T-cell (primary cell): ENCODE measurements at regions of chr13 and their contacts with region 1.

Region 1: DNA sequence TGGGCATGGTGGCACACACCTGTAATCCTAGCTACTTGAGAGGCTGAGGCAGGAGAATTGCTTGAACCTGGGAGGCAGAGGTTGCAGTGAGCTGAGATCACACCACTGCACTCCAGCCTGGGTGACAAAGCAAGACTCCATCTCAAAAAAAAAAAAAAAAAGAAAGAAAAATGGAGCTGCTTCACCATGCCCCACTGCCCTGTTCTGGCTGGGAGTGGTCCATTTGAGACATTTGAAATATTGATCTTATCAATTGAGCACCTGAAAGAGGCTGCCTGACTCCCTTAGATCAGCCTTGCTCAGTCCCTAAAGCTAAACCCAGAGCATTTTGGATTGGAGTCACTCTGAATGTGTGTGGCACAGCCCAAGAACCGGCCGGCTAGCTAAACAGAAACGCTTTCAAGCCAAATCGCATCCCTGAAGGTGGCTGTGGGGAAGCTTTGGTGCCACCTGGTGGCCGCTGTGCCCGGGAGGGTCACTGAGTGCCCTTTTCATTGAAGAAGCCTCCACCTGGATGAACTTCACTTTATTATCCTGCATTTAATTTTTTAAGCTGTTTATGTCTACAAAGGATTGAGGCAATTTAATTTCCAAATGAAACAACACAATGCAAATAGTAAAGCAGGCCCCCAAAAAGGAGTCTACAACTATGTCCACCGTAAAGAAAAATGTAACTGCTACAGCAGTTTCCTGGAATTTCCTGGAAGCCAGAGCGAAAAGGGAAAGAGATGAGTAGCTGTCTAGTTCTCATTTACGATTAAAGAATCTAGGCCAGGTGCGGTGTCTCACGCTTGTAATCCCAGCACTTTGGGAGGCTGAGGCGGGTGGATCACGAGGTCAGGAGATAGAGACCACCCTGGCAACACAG is 53.1 kb upstream of the SERPINE3 start:
- DNase-seq: peak; percentile 2 to 69 (median 45)
- ATAC-seq: peak; percentile 58 to 76 (median 68)
- H3K4me3 ChIP-seq: no peak overlapping the region
- H3K4me3 Mint-ChIP-seq: no peak overlapping the region
- H3K27ac ChIP-seq: no peak overlapping the region
- H3K27ac Mint-ChIP-seq: no peak overlapping the region
- H3K4me1 ChIP-seq: peaks cover 0 to 3% of the 10 kb centered on the region in 2 experiments
- H3K4me1 Mint-ChIP-seq: peaks cover 0 to 2% (median 0%) of the 10 kb centered on the region in 3 donors
- H3K27me3 ChIP-seq: peaks cover 0 to 3% of the 10 kb centered on the region in 2 experiments
- H3K27me3 Mint-ChIP-seq: peaks cover 0 to 7% of the 10 kb centered on the region in 2 donors

Region 2: GRCh38 chr13:51125498-51126226 is 160.7 kb before region 1 on chr13:
- CTCF ChIA-PET with region 1: interaction called, 5 to 10 read pairs
- POLR2A ChIA-PET with region 1: no interaction called
- DNase-seq: peak in 22 of 35 experiments; percentile 6 to 60 (median 18)
- ATAC-seq: peak in 3 of 4 experiments; percentile 37 to 71 (median 54)
- H3K4me3 ChIP-seq: no peak overlapping the region
- H3K4me3 Mint-ChIP-seq: no peak overlapping the region
- H3K27ac ChIP-seq: no peak overlapping the region
- H3K27ac Mint-ChIP-seq: no peak overlapping the region
- H3K4me1 ChIP-seq: no peaks in the 10 kb centered on the region
- H3K4me1 Mint-ChIP-seq: peaks cover 0 to 10% (median 7%) of the 10 kb centered on the region in 3 donors
- H3K27me3 ChIP-seq: peaks cover 0 to 9% of the 10 kb centered on the region in 2 experiments
- H3K27me3 Mint-ChIP-seq: peaks cover 9% of the 10 kb centered on the region in 2 donors

Region 3: GRCh38 chr13:51349016-51349415 is 62.6 kb after region 1 on chr13:
- CTCF ChIA-PET with region 1: no interaction called
- POLR2A ChIA-PET with region 1: no interaction called
- DNase-seq: no peak
- ATAC-seq: no peak
- H3K4me3 ChIP-seq: no peak overlapping the region
- H3K4me3 Mint-ChIP-seq: no peak overlapping the region
- H3K27ac ChIP-seq: no peak overlapping the region
- H3K27ac Mint-ChIP-seq: no peak overlapping the region
- H3K4me1 ChIP-seq: no peaks in the 10 kb centered on the region
- H3K4me1 Mint-ChIP-seq: no peaks in the 10 kb centered on the region
- H3K27me3 ChIP-seq: no peaks in the 10 kb centered on the region
- H3K27me3 Mint-ChIP-seq: no peaks in the 10 kb centered on the region

Region 4: GRCh38 chr13:51465124-51465523 is 178.8 kb after region 1 on chr13:
- CTCF ChIA-PET with region 1: no interaction called
- POLR2A ChIA-PET with region 1: no interaction called
- DNase-seq: no peak
- ATAC-seq: no peak
- H3K4me3 ChIP-seq: no peak overlapping the region
- H3K4me3 Mint-ChIP-seq: no peak overlapping the region
- H3K27ac ChIP-seq: no peak overlapping the region
- H3K27ac Mint-ChIP-seq: no peak overlapping the region
- H3K4me1 ChIP-seq: no peaks in the 10 kb centered on the region
- H3K4me1 Mint-ChIP-seq: no peaks in the 10 kb centered on the region
- H3K27me3 ChIP-seq: no peaks in the 10 kb centered on the region
- H3K27me3 Mint-ChIP-seq: peaks cover 0 to 3% of the 10 kb centered on the region in 2 donors

Region 5: DNA sequence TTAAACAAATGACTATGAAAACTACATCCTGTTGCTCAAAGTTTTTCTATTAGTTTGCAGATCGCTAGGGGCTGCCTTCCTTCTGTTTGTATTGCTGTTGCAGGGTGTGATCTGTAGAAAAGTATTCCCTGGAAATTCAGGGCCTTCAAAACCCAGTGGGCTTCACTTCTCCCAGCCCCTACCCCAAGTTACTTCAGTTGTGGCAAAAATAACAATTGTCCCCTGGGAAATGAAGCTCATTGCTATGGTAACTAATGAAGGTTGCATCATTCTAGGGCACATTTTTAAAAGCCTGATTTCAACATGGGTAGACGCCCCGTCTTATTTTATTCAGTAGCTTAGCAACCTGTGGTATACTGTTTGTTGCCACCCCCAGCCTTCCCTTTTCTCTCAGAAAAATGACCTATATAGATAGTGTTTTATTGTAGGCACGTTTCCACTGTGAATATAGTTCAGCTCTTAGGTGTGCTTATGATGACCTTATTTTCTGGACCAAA is 358.8 kb after region 1 on chr13:
- CTCF ChIA-PET with region 1: no interaction called
- POLR2A ChIA-PET with region 1: no interaction called
- DNase-seq: peak in 30 of 35 experiments; percentile 9 to 73 (median 39)
- ATAC-seq: peak; percentile 59 to 93 (median 74)
- H3K4me3 ChIP-seq: no peak overlapping the region
- H3K4me3 Mint-ChIP-seq: peak overlapping the region; percentile 45 to 71 (median 71)
- H3K27ac ChIP-seq: peak overlapping the region; percentile 96
- H3K27ac Mint-ChIP-seq: peak overlapping the region; percentile 93
- H3K4me1 ChIP-seq: peaks cover 30 to 42% of the 10 kb centered on the region in 2 experiments
- H3K4me1 Mint-ChIP-seq: peaks cover 42 to 59% (median 53%) of the 10 kb centered on the region in 3 donors
- H3K27me3 ChIP-seq: no peaks in the 10 kb centered on the region
- H3K27me3 Mint-ChIP-seq: no peaks in the 10 kb centered on the region

Region 6: GRCh38 chr13:52911340-52911739 is 1625.0 kb after region 1 on chr13:
- CTCF ChIA-PET with region 1: interaction called in 1 of 2 experiments, 15 read pairs
- POLR2A ChIA-PET with region 1: no interaction called
- DNase-seq: no peak
- ATAC-seq: no peak
- H3K4me3 ChIP-seq: no peak overlapping the region
- H3K4me3 Mint-ChIP-seq: no peak overlapping the region
- H3K27ac ChIP-seq: no peak overlapping the region
- H3K27ac Mint-ChIP-seq: no peak overlapping the region
- H3K4me1 ChIP-seq: no peaks in the 10 kb centered on the region
- H3K4me1 Mint-ChIP-seq: no peaks in the 10 kb centered on the region
- H3K27me3 ChIP-seq: peaks cover 0 to 6% of the 10 kb centered on the region in 2 experiments
- H3K27me3 Mint-ChIP-seq: peaks cover 2 to 12% of the 10 kb centered on the region in 2 donors